ENCODE measurements at regions of chrX and their contacts with region 1.

Region 1: DNA sequence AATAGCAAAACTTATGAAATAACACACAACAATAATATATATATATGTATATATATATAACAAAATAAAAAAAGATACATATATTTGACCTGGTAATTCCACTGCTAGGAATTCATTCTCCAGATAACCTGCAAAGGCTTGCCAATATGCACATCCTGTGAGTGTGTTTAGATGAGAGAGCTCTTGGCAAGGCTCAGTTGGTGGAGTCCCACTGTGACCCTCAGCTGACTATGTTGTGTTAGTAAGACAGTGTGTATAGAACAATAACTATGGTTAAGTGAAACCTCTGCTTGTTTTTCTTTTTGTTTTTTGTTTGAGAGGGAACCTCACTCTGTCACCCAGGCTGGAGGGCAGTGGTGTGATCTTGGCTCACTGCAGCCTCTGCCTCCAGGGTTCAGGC is 39.5 kb upstream of the RBMX start:
- DNase-seq: no peak
- H3K4me3 ChIP-seq: no peak overlapping the region
- H3K27ac ChIP-seq: no peak overlapping the region
- H3K4me1 ChIP-seq: no peaks in the 10 kb centered on the region
- H3K27me3 ChIP-seq: no peaks in the 10 kb centered on the region
- CTCF ChIP-seq: no peak

Region 2: DNA sequence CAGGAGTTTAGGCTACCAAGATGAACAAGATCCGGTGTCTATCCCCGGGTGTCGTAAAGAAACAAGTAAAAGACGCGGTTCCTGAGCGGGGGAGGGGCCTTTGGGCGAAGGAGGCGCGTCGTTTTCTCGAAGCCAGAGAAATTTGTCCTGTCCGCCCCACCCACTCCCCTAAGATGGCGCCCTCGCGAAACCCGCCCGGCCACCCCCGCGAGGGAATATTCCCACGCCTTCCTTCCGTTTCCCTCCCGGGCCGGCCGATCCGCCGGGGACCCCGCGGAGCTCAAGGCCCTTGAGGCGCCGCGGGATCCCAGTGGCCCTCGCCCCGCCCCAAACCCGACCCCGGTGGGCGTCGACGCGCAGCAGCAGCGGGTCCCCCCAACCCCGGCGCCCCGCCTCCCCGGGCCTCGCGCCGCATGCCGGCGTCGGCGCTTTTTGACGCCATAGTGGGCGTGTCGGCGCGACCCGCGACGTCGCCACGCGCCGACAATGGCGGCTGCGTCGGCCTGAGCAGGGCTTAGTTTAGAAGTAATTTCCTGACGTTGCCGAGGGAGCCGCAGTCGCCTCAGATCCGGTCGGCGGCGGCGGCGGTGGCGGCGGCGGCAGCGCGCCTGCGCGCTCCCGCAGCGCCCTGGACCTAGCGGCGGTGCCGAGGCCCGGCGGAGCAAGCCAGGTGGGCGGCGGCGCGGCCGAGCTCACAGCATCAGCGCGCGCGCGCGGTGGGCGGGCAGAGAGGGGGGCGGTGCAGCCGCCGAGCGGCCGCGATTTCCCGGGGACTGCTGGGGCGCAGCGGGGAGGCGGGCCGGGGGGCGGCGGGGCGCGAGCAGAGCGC is 423.0 kb before region 1 on chrX and contains the start of gene HTATSF1:
- intact Hi-C with region 1: loop called (anchors 10 kb)
- DNase-seq: peak; percentile 49 to 93
- H3K4me3 ChIP-seq: peak within 1 kb of the TSS; percentile 58 to 75
- H3K27ac ChIP-seq: peak within 1 kb of the TSS; percentile 86 to 93
- H3K4me1 ChIP-seq: no peaks in the 10 kb centered on the region
- H3K27me3 ChIP-seq: peaks cover 3% of the 10 kb centered on the region
- CTCF ChIP-seq: peak in 1 of 3 experiments; percentile 3
- total RNA-seq, gene HTATSF1: 3.7 TPM

Region 3: DNA sequence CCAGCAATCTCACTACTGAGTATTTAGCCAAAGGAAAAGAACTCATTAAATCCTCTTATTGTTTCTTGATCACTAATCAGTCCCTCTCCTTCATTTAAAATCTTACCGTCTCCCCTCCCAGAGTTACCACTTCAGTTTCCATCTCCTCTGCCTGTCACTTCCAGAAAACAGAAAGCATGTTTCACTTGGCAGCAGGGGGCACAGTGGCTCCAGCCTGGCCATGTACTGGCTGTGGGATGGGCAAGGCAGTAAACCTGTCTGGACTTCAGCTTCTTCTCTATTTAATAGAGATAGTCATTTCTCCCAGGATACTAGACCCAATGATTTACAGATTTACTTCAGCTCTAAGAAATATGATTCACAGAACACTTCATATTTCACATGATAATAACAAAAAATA is 208.9 kb before region 1 on chrX:
- intact Hi-C with region 1: loop called (anchors 2 kb)
- DNase-seq: no peak
- H3K4me3 ChIP-seq: no peak overlapping the region
- H3K27ac ChIP-seq: no peak overlapping the region
- H3K4me1 ChIP-seq: no peaks in the 10 kb centered on the region
- H3K27me3 ChIP-seq: no peaks in the 10 kb centered on the region
- CTCF ChIP-seq: peak in 2 of 3 experiments; percentile 36 to 55

Region 4: DNA sequence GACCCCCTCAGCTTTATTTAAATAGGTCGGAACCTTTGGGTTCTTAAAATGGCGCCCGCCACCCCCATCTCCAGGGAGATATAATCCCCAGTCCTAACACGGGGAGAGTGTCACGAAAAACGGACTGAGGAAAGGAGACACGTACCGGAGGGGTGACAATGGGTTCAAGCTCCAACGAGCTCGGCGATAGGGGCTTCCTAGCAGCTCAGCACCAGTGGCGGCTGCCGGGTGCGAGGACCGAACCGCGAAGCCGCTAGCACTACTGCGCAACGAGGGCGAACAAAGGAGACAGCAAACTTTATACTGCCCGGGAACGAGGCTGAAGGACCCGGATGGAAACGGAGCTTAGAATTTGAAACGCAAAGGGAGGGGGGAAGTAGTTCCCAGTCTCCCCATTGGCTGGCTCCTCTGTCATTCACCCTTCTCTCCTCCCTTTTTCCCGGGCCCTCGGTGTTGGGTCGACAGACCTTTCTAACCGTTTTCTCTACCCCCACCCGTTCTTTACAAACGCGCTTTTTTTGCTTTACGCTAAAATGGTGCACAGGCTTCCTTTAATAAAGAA is 39.5 kb before region 1 on chrX and contains the start of gene RBMX:
- intact Hi-C with region 1: loop called (anchors 1 kb)
- DNase-seq: peak; percentile 46 to 93
- H3K4me3 ChIP-seq: peak within 1 kb of the TSS; percentile 70 to 72
- H3K27ac ChIP-seq: peak within 1 kb of the TSS; percentile 91 to 95
- H3K4me1 ChIP-seq: no peaks in the 10 kb centered on the region
- H3K27me3 ChIP-seq: no peaks in the 10 kb centered on the region
- CTCF ChIP-seq: no peak
- total RNA-seq, gene RBMX: 112 TPM

Measured in ascending aorta (tissue), 2 donors.